Activated T-helper 2 cell treated with anti-CD3 and anti-CD28 coated beads, Interferon-gamma antibody, Interleukin-2, Interleukin-4, amounts not matched to agents 10 μg/mL and 5 μg/mL and 100 μg/mL, durations not matched to agents 14 hours and 24 hours and 36 hours (primary cell): ENCODE measurements at regions of chr7 and their contacts with region 1.

Region 1: DNA sequence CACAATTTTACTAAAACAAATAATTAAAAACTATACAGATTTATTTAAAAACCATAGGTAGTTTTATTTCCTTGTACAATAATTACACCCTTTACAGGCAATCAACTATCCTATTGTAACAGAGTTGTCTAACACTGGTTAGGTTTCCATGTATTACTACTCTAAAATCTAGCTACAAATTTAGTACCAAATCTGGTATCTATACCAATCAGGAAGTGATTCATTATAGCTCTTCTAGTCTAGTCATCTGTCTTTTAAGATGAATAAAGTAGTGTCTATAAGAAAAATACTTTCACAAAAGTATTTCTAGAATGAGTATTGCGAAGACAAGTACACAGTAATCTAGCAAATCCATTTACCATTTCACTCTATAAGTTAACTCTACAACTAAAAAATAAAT is 16.9 kb downstream of the ZNF800 start:
- DNase-seq: no peak
- H3K4me3 Mint-ChIP-seq: no peak overlapping the region
- H3K27ac Mint-ChIP-seq: no peak overlapping the region
- H3K4me1 Mint-ChIP-seq: peaks cover 41% of the 10 kb centered on the region
- H3K27me3 Mint-ChIP-seq: no peaks in the 10 kb centered on the region

Region 2: DNA sequence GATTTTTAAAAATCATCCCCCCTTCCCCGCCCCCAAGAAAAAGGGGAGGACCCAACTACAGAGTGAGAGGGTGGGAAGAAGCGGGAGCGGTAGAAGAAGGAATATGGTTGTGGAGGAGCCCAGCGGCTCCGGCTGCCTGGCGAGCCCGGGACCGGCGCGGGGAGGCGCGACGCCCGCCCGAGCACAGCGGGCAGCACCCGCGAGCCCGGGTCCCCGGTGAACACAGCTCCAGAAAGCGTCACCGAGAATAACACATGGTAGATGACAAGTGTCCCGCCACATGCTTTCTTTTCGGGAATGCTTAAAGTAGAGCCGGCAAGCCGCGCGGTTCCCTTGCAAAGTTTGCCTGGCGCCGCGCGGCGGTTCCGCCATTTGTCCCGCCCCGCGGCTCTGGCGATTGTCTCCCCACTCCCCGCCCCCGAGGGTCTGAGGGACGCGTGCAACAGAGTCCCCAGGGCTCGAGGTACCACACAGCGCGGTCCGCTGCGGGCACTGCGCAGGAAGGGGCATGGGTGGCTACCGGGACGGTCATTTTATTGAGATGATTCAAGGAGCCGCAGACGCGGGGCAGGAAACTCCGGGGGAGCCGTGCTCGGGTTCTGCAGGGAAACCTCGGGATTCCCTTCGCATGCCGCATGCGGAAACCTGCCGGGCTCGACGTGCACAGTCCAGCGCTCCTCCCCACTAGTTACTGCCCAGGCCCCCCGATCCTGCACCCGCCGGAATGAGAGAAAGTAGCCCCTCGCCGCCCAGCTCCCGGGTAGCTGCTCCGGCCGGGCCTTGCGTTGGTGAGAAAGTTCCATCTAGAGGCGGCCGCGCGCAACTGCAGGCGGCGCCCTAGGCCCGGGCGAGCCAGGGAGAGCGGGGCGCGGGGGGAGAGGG is 122.1 kb before region 1 on chr7:
- intact Hi-C with region 1: no loop called
- DNase-seq: peak; percentile 41
- H3K4me3 Mint-ChIP-seq: peak overlapping the region; percentile 80
- H3K27ac Mint-ChIP-seq: no peak overlapping the region
- H3K4me1 Mint-ChIP-seq: peaks cover 9% of the 10 kb centered on the region
- H3K27me3 Mint-ChIP-seq: peaks cover 70% of the 10 kb centered on the region

Region 3: DNA sequence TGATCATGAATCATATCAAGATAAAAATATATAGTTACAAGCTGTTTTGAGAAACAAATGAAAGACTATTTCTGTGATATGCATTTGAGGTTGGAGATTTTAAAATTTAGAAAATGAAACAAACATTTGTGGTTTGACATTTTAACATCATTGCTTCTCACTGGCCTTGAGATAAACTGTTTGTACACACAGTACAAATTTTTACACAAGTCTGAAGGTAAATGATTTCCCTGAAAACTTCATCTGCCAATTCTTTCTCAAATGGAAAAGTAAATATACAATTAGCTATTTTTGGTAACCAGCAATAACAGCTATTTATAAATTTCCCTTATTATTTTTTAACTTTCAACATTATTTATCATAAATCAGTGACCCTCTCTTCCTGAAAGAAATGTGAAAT is 21.7 kb before region 1 on chr7:
- intact Hi-C with region 1: loop called (anchors 2 kb)
- DNase-seq: no peak
- H3K4me3 Mint-ChIP-seq: no peak overlapping the region
- H3K27ac Mint-ChIP-seq: no peak overlapping the region
- H3K4me1 Mint-ChIP-seq: peaks cover 23% of the 10 kb centered on the region
- H3K27me3 Mint-ChIP-seq: no peaks in the 10 kb centered on the region

Region 4: GRCh38 chr7:127413962-127414361 is 38.3 kb after region 1 on chr7:
- intact Hi-C with region 1: loop called (anchors 1 kb)
- DNase-seq: no peak
- H3K4me3 Mint-ChIP-seq: no peak overlapping the region
- H3K27ac Mint-ChIP-seq: no peak overlapping the region
- H3K4me1 Mint-ChIP-seq: peaks cover 39% of the 10 kb centered on the region
- H3K27me3 Mint-ChIP-seq: peaks cover 25% of the 10 kb centered on the region